ENCODE measurements at regions of chr11 and their contacts with region 1.

Region 1: DNA sequence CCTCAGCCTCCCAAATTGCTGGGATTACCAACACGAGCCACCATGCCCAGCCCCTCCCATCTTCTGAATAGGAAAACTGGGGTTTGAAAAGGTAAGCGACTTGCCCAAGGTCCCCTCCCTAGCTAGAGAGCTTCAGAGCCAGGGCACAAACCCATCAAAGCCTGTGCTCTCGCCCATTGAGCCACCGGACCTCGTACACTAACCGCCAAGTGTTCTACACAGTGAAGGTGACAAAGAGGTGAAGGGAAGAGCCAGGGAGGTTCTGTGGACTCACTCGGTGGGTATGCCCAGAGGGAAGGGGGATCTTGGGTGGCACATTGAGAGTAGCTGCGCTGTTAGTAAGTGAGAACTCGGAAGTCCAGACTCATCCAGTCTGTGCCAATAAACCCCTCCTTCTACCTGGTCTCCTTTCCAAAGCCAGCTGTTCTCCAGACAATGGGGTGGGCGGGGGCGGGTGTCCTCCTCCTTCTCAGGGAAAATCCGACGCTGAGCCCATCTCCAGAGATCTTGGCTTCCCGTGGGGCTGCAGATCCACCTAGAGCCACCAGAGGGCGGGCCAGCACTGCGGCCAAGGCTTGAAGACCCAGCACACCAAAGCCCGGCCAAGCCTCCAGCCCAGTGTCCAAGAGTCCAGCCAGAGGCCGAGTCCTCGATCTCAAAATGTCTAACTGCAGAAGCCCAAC is 3.2 kb upstream of the RTN4RL2 start:
- DNase-seq: peak; percentile 67
- H3K27ac ChIP-seq: no peak overlapping the region
- CTCF ChIP-seq: peak; percentile 97

Region 2: GRCh38 chr11:57294605-57295131 is 162.4 kb before region 1 on chr11:
- CTCF ChIA-PET with region 1: no interaction called
- POLR2A ChIA-PET with region 1: no interaction called
- DNase-seq: peak; percentile 39
- H3K27ac ChIP-seq: peak overlapping the region; percentile 100
- CTCF ChIP-seq: no peak

Region 3: DNA sequence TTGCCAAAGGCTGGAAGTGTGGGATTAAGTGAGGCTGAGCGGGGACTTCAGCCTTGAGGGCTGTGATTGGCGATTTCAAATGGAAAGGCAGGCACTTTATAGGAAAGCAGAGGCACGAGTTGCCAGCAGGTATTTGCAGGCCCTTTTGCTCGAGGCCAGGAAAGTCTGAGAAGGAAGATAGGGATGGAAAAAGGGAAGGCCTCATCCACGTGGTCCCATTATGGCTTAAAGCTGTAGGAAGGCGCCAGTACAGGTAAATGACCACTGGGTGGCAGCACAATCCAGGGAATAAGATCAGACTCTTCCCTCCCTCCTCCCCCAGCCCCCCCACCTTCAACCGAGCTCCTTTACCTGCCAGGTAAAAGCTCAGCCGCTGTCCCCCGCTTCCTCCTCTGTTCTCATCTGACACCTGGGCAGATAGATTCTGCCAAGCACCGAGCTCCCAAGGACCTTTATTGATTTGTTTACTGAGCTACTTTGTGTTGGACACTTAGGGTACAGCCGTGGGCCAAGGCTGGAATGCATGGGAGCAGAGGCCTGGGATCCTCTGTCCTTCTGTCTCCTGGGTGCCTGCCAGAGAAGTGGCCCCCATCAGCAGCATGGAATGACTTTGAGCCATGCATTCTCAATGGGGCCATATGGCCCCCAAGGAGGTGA is 111.4 kb before region 1 on chr11:
- CTCF ChIA-PET with region 1: interaction called, 13 read pairs
- POLR2A ChIA-PET with region 1: no interaction called
- DNase-seq: peak; percentile 90
- H3K27ac ChIP-seq: no peak overlapping the region
- CTCF ChIP-seq: peak; percentile 70

Region 4: DNA sequence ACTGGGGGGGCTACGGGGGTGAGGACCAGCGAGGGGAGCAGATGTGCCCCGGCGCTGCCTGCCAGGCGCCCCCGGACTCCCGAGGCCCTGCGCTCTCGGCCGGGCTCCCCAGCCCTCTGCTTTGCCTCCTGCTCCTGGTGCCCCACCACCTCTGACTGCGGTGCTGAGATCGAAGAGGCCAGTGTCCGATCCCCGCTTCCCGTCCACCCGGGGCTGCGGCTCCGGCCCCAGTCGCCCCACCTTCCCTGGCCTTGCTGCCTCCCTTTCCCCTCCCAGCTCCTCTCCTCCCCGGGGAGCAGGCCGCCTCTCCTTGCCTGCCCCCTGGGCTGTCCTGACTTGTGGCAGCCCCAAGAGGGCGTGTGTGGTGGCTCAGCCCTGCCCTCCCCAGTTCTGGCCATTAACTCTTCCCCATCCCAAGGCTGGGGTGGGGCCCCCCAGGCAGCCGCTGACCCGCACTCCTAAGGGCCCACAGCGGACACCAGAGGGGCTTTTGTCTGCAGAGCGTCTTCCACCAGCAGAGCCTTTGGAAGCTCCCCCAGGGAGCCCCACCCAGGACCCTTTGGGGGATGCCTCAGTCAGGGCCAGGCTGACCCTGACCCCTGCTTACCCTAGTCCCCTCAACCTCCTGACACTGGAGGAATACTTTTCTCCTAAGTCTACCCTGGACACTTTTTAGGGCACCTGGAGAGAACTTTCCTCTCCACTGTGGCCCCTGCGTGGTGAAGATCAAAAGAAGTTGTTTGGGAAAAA is 19.8 kb after region 1 on chr11:
- CTCF ChIA-PET with region 1: interaction called, 13 read pairs
- POLR2A ChIA-PET with region 1: no interaction called
- DNase-seq: peak; percentile 63
- H3K27ac ChIP-seq: no peak overlapping the region
- CTCF ChIP-seq: peak; percentile 46

Region 5: DNA sequence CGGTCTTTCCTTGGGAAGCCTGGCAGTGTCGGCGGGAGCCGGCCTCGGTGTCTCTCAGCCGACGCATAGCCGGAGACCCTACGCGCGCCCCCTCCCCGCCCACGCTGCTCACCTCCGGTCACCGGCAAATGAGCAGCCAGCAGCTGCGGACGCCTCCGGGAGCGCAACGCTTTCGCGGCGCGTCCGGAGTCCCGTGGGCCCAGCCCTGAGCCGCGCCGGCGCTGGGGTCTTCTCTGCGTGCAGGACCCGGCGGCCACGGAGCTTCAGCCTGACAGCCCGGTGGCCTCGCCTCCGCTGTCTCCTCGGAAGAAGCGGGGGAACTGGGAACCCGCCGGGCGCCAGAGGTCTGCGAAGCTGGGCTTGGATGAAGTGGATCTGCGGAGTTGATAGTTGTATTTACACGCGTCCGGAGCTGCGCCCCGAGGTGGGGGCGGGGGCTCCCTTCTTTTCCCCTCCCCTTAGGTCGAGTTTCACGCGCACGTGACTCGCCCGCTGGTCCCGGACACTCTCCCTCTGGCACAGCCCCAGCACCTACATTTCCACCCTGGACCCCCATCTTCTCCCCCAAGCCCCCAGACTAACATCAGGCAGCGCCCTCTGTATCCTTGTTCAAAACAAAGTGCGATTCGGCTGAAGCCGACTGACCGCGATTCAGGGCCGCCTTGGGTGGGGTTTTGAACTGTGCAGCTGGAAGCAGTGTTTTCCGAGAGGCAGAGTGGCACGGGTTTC is 58.4 kb after region 1 on chr11 and contains the start of gene SLC43A1:
- CTCF ChIA-PET with region 1: interaction called, 15 read pairs
- POLR2A ChIA-PET with region 1: no interaction called
- DNase-seq: peak; percentile 25
- H3K27ac ChIP-seq: peak within 1 kb of the TSS; percentile 63
- CTCF ChIP-seq: no peak

Region 6: GRCh38 chr11:57530596-57531507 is 73.8 kb after region 1 on chr11 and contains the start of gene TIMM10:
- CTCF ChIA-PET with region 1: interaction called, 67 read pairs
- POLR2A ChIA-PET with region 1: no interaction called
- DNase-seq: peak; percentile 91
- H3K27ac ChIP-seq: peak within 1 kb of the TSS; percentile 66
- CTCF ChIP-seq: no peak

Region 7: DNA sequence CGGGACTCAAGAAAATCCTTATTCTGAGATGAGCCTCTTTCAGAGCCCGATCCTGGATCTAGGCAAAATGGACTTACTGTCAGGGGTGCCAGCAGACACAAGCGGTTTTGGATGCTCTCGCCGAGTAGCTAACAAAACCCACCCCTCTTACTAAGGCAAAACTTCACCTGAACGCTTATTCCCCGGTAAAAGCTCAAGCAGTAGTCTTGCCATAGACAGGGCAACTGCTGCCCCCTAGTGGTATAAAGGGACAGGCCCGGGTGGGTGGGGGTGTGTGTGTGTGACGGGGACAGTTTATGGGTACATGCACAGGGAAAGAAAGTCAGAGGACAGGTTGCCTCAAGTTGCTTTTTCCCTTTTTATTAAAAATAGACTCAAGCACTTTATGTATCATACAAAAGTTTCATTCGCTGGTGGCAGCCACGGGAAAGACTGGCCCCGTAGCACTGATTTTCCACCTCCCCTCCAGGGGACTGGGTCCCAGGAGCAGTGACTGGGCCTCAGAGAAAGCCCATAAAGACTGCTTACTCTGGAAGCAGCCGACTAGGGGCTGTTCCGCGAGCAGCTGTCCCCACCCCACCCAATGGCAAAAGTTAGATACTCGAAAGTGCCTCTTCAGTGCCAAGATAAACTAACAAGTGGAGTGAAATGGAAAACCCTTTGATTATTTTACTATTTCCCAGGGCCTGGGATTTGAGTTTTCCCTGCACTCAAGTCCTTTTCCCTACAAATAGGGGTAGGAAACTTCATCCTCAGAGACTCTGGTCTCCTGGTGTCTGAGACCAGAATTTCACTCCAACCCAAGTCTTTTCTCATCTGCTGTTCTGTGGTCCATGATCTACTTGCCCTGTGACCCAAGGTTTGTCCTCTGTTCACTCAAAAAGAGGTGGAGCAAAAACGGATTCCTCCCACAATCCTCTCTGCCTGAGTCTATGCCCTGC is 187.9 kb after region 1 on chr11:
- CTCF ChIA-PET with region 1: interaction called, 18 read pairs
- POLR2A ChIA-PET with region 1: no interaction called
- DNase-seq: peak; percentile 75
- H3K27ac ChIP-seq: peak overlapping the region; percentile 39
- CTCF ChIP-seq: peak; percentile 86

Measured in RWPE1 (cell line).